ENCODE measurements at regions of chr2 and their contacts with region 1.

Region 1: GRCh38 chr2:121420486-121420885 is 110.2 kb upstream of the RNU4ATAC start:
- DNase-seq: no peak

Region 2: DNA sequence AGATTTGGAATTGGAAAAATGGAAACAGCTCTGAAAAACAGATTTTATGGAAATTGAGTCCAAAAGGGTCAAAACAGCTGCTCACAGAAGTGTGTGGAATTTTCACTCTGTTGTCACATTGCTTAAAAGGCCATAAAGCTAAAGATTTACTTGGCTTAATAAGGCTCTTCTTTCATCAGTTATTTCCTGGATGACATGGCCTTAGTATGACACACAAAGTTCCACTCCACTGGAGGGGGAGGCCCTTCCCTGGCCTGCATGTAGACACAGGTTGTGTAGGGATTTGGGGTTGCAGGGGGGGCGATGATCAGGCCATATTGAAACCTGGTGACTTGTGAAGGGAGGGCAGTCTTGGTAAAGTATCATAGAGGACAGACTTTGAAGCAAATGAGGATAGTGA is 1231.3 kb before region 1 on chr2:
- intact Hi-C with region 1: no loop called
- DNase-seq: no peak

Region 3: GRCh38 chr2:121349721-121350401 is 70.6 kb before region 1 on chr2:
- intact Hi-C with region 1: no loop called
- DNase-seq: no peak

Region 4: GRCh38 chr2:121363632-121364420 is 56.7 kb before region 1 on chr2:
- intact Hi-C with region 1: loop called in 1 of 2 experiments (anchors 2 kb)
- DNase-seq: no peak

Measured in posterior vena cava (tissue), 2 donors.